HepG2 (cell line): ENCODE measurements at regions of chr6 and their contacts with region 1.

Region 1: DNA sequence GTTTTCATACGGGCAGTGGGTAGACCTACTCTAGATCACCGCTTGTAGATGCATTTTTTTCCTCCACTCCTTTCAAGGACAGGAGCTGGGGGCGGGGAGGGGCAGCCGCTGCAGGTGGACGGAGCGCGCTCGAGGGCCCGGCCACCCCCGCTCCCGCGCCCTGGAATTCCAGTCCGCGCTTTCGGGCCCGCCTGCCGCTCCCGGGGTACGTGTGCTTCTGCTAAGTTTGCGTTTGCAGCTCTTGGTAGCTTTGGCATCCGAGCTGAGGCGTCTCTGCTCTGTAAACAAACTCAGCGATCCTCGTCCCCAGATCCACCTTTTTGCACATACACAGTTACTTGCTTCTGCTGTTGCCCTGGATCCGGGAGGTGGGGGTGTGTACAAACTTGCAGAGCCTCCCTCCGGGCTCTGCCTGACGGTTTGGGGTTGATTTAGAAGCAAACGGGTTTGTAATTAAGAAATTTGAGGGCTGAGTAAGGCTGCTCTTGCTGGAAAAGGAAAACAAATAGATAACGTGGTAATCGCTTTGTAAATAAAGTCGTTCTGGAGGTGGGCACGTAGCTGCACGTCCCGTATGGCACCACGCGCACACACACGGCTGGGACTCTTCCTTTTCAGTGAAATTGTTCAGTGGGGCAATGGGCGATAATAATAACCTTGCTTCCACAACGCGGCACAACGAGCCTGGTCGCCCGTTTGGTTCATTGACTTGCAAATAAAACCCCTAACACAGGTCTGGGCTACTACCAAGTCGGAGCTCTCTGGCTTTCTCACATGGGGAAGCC is 976 bp upstream of the CITED2 start:
- DNase-seq: peak; percentile 96
- ATAC-seq: peak; percentile 79
- H3K4me3 ChIP-seq: peak overlapping the region; percentile 65 to 99 (median 83)
- H3K27ac ChIP-seq: peak overlapping the region; percentile 93
- H3K4me1 ChIP-seq: peaks cover 61% of the 10 kb centered on the region
- H3K27me3 ChIP-seq: peaks cover 0 to 3% of the 10 kb centered on the region in 2 experiments; a peak in 1 of 5 replicates
- CTCF ChIP-seq: peak; percentile 53
- EP300 ChIP-seq: peak; percentile 41 to 71
- POLR2A ChIP-seq: peak; percentile 52 to 71
- RAD21 ChIP-seq: peak; percentile 54; the same call in 1 of the 2 replicates

Region 2: GRCh38 chr6:138588805-138589434 is 786.5 kb before region 1 on chr6:
- CTCF ChIA-PET with region 1: no interaction called
- POLR2A ChIA-PET with region 1: no interaction called
- in situ Hi-C with region 1: loop called (anchors 25 kb)
- intact Hi-C with region 1: no loop called
- DNase-seq: peak; percentile 80
- ATAC-seq: peak; percentile 41
- H3K4me3 ChIP-seq: no peak overlapping the region
- H3K27ac ChIP-seq: no peak overlapping the region
- H3K4me1 ChIP-seq: peaks cover 61% of the 10 kb centered on the region
- H3K27me3 ChIP-seq: no peaks in the 10 kb centered on the region
- CTCF ChIP-seq: peak; percentile 94
- EP300 ChIP-seq: no peak
- POLR2A ChIP-seq: no peak
- RAD21 ChIP-seq: peak; percentile 86

Region 3: GRCh38 chr6:139338840-139339239 is 36.6 kb before region 1 on chr6:
- CTCF ChIA-PET with region 1: no interaction called
- POLR2A ChIA-PET with region 1: no interaction called
- in situ Hi-C with region 1: no loop called
- intact Hi-C with region 1: no loop called
- DNase-seq: no peak
- ATAC-seq: no peak
- H3K4me3 ChIP-seq: no peak overlapping the region
- H3K27ac ChIP-seq: no peak overlapping the region
- H3K4me1 ChIP-seq: no peaks in the 10 kb centered on the region
- H3K27me3 ChIP-seq: no peaks in the 10 kb centered on the region; a peak in 1 of 5 replicates
- CTCF ChIP-seq: no peak
- EP300 ChIP-seq: no peak
- POLR2A ChIP-seq: no peak
- RAD21 ChIP-seq: no peak

Region 4: DNA sequence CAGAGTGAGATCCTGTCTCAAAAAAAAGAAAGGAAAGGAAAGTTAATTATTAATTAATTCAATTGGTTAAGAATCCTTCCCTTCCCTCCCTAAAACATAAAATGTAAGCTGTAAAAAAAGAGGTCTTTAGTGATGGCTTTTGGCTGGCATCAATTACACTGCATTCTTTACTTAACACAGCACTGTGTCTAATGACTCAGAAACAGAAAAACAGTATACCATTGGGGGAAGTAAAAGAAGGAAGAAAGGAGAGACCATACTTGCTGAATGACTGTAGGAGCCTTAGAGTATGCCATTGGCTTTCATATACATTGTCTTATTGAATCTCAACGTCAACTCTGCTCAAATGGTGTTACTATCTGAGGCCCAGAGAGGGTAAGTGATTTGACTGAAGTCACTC is 17.4 kb after region 1 on chr6:
- CTCF ChIA-PET with region 1: no interaction called
- POLR2A ChIA-PET with region 1: interaction called, 17 read pairs
- in situ Hi-C with region 1: no loop called
- intact Hi-C with region 1: no loop called
- DNase-seq: no peak
- ATAC-seq: peak; percentile 16; the same call in 2 of the 3 replicates
- H3K4me3 ChIP-seq: no peak overlapping the region
- H3K27ac ChIP-seq: no peak overlapping the region
- H3K4me1 ChIP-seq: peaks cover 61% of the 10 kb centered on the region
- H3K27me3 ChIP-seq: no peaks in the 10 kb centered on the region
- CTCF ChIP-seq: no peak
- EP300 ChIP-seq: no peak
- POLR2A ChIP-seq: no peak
- RAD21 ChIP-seq: no peak

Region 5: GRCh38 chr6:139508023-139508422 is 132.6 kb after region 1 on chr6:
- CTCF ChIA-PET with region 1: no interaction called
- POLR2A ChIA-PET with region 1: interaction called, 9 read pairs
- in situ Hi-C with region 1: no loop called
- intact Hi-C with region 1: loop called (anchors 1 kb)
- DNase-seq: peak; percentile 23
- ATAC-seq: peak; percentile 40
- H3K4me3 ChIP-seq: no peak overlapping the region
- H3K27ac ChIP-seq: peak overlapping the region; percentile 28
- H3K4me1 ChIP-seq: peaks cover 42% of the 10 kb centered on the region
- H3K27me3 ChIP-seq: no peaks in the 10 kb centered on the region
- CTCF ChIP-seq: no peak
- EP300 ChIP-seq: no peak
- POLR2A ChIP-seq: no peak
- RAD21 ChIP-seq: no peak

Region 6: DNA sequence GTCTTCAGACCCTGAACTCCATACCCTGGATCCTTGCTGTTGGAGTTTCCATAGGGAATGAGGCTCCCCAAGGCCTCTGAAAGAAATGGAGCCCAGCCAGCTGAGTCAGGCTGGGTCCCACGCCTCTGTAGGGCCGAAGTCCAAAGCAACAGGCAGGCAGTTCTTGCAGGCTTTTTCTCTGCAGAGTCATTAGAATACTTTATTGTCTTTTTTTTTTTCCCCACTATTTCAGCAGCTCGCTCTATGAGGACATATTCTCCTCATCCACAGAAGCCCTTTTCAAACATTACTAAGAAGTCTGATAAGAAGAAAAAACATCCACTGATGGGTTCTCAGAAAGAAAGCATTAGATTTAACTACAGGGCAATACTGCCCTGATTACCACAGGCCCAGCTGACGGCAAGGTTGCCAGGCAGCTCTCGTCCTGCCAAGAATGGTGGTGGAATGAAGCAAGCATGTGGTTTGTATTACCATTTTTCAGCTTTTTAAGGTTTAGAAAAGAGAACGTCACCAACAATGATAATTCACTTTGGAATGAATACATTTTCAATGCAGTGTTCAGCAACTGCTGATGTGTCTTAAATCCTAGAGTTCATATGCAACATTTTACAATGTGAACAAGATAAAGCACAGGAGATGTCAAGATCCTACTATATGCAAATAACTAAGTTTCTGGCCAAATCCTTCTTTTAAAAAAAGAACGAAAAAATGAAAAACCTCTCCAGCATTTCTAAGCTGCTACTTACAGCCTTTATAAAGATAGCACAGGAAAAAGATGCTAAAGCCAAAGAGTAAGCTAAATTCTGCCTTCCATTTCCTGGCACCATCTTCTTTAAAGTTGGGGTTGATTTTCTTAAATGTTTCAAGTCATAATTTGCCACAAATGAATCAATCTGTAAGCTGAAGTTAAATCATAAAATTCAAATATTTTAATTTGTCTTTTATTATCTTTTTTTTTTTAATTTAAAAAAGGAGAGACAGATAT is 222.6 kb after region 1 on chr6:
- CTCF ChIA-PET with region 1: no interaction called
- POLR2A ChIA-PET with region 1: interaction called, 14 read pairs
- in situ Hi-C with region 1: no loop called
- intact Hi-C with region 1: no loop called
- DNase-seq: peak; percentile 87
- ATAC-seq: peak; percentile 100
- H3K4me3 ChIP-seq: peak overlapping the region in 2 of 3 experiments; percentile 0 to 43; a peak in 3 of 6 replicates
- H3K27ac ChIP-seq: peak overlapping the region; percentile 28
- H3K4me1 ChIP-seq: peaks cover 26% of the 10 kb centered on the region
- H3K27me3 ChIP-seq: no peaks in the 10 kb centered on the region
- CTCF ChIP-seq: no peak
- EP300 ChIP-seq: peak in 1 of 2 experiments; percentile 69; a peak in 2 of 4 replicates
- POLR2A ChIP-seq: no peak
- RAD21 ChIP-seq: no peak

Region 7: DNA sequence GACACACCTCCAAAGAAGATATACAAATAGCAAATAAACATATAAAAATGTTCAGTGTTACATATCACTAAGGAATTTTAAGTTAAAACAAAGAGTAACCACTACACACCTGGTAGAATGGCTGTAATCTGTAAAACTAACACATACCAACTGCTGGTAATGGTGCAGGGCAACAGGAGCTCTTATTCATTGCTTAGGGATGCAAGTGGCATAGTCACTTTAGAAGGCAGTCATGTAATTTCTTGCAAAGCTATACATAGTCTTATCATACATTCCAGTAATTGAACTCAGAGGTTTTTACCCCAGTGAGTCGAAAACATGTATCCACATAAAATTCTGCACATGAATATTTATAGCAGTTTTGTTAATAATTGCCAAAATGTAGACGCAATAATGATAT is 905.8 kb after region 1 on chr6:
- CTCF ChIA-PET with region 1: no interaction called
- POLR2A ChIA-PET with region 1: interaction called, 4 read pairs
- in situ Hi-C with region 1: no loop called
- intact Hi-C with region 1: loop called (anchors 10 kb)
- DNase-seq: no peak
- ATAC-seq: peak; percentile 57; the same call in 2 of the 3 replicates
- H3K4me3 ChIP-seq: no peak overlapping the region
- H3K27ac ChIP-seq: no peak overlapping the region
- H3K4me1 ChIP-seq: peaks cover 12% of the 10 kb centered on the region
- H3K27me3 ChIP-seq: no peaks in the 10 kb centered on the region
- CTCF ChIP-seq: no peak
- EP300 ChIP-seq: no peak
- POLR2A ChIP-seq: no peak
- RAD21 ChIP-seq: no peak

Region 8: DNA sequence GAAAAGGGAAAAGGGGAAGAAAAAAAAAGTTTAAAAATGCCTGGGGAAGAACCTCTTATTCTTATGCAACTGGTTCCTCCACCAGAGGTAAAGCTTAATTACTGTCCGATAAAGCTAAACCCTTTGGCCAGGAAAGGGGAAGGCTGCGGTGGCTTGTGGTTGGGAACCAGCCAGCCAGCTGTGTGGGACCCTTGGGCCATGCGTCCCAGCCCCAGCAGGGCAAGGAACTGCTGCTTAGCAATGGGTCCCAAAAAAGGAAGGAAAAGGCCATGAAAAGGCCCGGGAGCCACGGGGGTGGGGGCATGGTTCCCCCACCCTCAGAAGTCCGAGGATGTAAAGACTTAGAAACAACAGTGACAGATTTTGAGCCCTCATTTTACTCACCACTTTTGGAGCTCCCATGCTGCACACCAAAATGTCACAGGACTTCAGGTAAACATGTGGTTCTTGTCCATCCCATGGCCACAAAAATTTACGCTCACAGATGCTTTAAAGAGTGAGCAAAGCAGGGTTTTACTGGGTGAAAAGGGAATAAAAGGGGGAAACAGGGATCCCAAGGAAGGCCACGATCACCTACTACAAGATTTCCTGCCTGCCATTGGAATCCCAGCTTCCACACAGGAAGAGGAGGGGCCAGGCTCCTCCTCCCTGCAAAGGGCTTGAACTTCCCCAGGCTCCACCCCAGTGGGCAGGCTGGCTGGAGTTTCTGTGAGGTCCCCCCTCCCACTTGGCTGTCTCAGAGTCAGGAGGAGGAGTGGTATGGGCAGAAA is 1522.6 kb after region 1 on chr6:
- CTCF ChIA-PET with region 1: no interaction called
- POLR2A ChIA-PET with region 1: interaction called, 10 read pairs
- in situ Hi-C with region 1: loop called (anchors 25 kb)
- intact Hi-C with region 1: loop called (anchors 10 kb)
- DNase-seq: peak; percentile 85
- ATAC-seq: peak; percentile 99
- H3K4me3 ChIP-seq: peak overlapping the region; percentile 86 to 98 (median 88)
- H3K27ac ChIP-seq: peak overlapping the region; percentile 70
- H3K4me1 ChIP-seq: peaks cover 17% of the 10 kb centered on the region
- H3K27me3 ChIP-seq: no peaks in the 10 kb centered on the region; a peak in 1 of 5 replicates
- CTCF ChIP-seq: no peak
- EP300 ChIP-seq: no peak
- POLR2A ChIP-seq: peak; percentile 84 to 86
- RAD21 ChIP-seq: no peak